ENCODE measurements at regions of chr4 and their contacts with region 1.

Region 1: DNA sequence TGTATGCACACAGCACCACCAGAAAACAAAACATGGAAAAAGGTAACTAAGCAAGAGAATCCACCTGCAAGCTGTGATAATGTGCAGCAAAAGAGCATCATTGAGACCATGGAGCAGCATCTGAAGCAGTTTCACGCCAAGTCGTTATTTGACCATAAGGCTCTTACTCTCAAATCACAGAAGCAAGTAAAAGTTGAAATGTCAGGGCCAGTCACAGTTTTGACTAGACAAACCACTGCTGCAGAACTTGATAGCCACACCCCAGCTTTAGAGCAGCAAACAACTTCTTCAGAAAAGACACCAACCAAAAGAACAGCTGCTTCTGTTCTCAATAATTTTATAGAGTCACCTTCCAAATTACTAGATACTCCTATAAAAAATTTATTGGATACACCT is 90.2 kb downstream of the TET2 start:
- DNase-seq: no peak
- H3K4me3 ChIP-seq: no peak overlapping the region
- H3K27ac ChIP-seq: no peak overlapping the region
- H3K4me1 ChIP-seq: no peaks in the 10 kb centered on the region
- H3K27me3 ChIP-seq: no peaks in the 10 kb centered on the region
- CTCF ChIP-seq: no peak

Region 2: GRCh38 chr4:105225500-105225899 is 11.4 kb before region 1 on chr4:
- CTCF ChIA-PET with region 1: no interaction called
- POLR2A ChIA-PET with region 1: interaction called, 11 read pairs
- intact Hi-C with region 1: no loop called
- DNase-seq: no peak
- H3K4me3 ChIP-seq: no peak overlapping the region
- H3K27ac ChIP-seq: no peak overlapping the region
- H3K4me1 ChIP-seq: peaks cover 10% of the 10 kb centered on the region
- H3K27me3 ChIP-seq: no peaks in the 10 kb centered on the region
- CTCF ChIP-seq: no peak

Measured in A673 (cell line).